Vagina (tissue), 2 donors: ENCODE measurements at regions of chr22 and their contacts with region 1.

Region 1: GRCh38 chr22:45096256-45096907 is 67.3 kb upstream of the NUP50 start:
- DNase-seq: no peak
- H3K4me3 ChIP-seq: no peak overlapping the region
- H3K27ac ChIP-seq: no peak overlapping the region
- H3K4me1 ChIP-seq: peaks cover 6% of the 10 kb centered on the region
- H3K27me3 ChIP-seq: no peaks in the 10 kb centered on the region
- CTCF ChIP-seq: peak in 2 of 3 experiments; percentile 59 to 69
- POLR2A ChIP-seq: no peak

Region 2: DNA sequence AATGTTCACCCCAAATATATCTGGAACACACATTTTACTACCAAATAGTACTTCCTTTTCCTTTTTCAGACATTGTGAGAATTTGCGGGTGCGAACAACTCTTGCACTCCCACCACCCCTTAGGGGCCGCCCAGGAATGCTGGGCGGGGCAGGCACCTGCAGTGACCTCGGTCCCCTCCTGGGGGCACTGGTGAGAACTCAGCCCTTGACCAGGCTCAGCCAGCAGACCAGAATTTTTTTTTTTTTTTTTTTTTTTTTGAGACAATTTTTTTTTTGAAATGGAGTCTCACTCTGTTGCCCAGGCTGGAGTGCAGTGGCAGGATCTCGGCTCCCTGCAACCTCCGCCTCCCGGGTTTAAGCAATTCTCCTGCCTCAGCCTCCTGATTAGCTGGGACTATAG is 268.2 kb before region 1 on chr22:
- intact Hi-C with region 1: loop called (anchors 10 kb)
- DNase-seq: no peak
- H3K4me3 ChIP-seq: no peak overlapping the region
- H3K27ac ChIP-seq: no peak overlapping the region
- H3K4me1 ChIP-seq: no peaks in the 10 kb centered on the region
- H3K27me3 ChIP-seq: no peaks in the 10 kb centered on the region
- CTCF ChIP-seq: no peak
- POLR2A ChIP-seq: no peak